H1 (cell line): ENCODE measurements at regions of chr1 and their contacts with region 1.

Region 1: GRCh38 chr1:196344453-196344852 is 263.8 kb downstream of the KCNT2 start:
- DNase-seq: no peak
- H3K4me3 ChIP-seq: peak overlapping the region in 1 of 4 experiments; percentile 7; a peak in 1 of 8 replicates
- H3K27ac ChIP-seq: no peak overlapping the region
- H3K4me1 ChIP-seq: peaks cover 3 to 11% (median 7%) of the 10 kb centered on the region in 4 experiments; a peak in 6 of 7 replicates
- H3K27me3 ChIP-seq: peaks cover 0 to 1% (median 0%) of the 10 kb centered on the region in 4 experiments; a peak in 1 of 7 replicates
- CTCF ChIP-seq: no peak
- EP300 ChIP-seq: no peak
- POLR2A ChIP-seq: no peak
- RAD21 ChIP-seq: no peak

Region 2: GRCh38 chr1:196355206-196355786 is 10.8 kb after region 1 on chr1:
- CTCF ChIA-PET with region 1: interaction called, 15 read pairs
- POLR2A ChIA-PET with region 1: no interaction called
- DNase-seq: no peak
- H3K4me3 ChIP-seq: no peak overlapping the region
- H3K27ac ChIP-seq: no peak overlapping the region
- H3K4me1 ChIP-seq: no peaks in the 10 kb centered on the region; a peak in 1 of 7 replicates
- H3K27me3 ChIP-seq: no peaks in the 10 kb centered on the region
- CTCF ChIP-seq: peak in 1 of 3 experiments; percentile 36; a peak in 2 of 4 replicates
- EP300 ChIP-seq: no peak
- POLR2A ChIP-seq: no peak
- RAD21 ChIP-seq: peak; percentile 43 to 47; a peak in 3 of 4 replicates